ENCODE measurements at regions of chr18 and their contacts with region 1.

Region 1: DNA sequence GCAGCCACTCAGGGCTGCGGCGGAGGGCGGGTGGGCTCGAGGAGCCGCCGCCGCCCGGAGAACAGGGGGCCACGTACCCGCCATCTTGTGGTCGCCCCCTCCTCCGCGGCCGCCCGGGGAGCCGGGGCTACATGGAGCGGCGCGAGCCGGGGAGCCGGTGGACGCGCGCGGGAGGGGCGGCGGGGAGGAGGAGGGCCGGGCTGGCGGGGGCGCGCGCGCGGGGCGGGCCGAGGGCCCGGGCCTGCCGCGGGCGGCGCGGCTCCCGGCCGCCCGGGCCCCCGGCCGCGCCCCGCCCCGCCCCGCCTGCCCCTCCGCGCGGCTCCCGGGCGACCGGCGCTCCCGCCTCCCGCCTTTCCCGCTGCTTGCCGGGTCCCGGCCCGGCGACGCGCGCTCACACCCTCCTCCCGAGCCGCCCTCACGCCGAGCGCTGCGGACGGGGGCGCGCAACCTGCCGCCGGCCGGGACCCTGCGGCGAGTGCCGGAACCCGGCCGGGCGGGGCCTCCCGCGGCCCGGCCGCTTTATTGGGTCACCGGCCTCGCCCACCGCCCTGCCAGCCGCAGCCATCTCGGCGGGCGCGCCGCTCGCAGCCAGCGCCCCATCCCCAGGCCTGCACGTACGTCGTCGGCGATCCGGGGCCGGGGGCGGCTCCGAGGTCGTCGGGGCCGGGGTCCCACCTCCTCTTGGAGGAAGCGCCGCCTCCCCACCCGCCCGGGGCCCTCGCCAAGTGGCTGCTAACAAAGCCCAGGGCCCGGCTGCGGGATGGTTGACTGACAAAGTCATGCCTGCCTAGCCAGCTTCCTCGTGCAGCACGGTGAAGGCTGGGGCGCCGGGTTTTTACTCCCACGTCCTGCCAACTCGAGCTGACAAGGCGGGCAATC is at the start of gene PPP4R1:
- DNase-seq: peak; percentile 83
- ATAC-seq: peak; percentile 70
- H3K4me3 ChIP-seq: peak within 1 kb of the TSS; percentile 50 to 81 (median 67)
- H3K4me3 Mint-ChIP-seq: peak within 1 kb of the TSS; percentile 93
- H3K27ac ChIP-seq: peak within 1 kb of the TSS; percentile 75 to 76
- H3K27ac Mint-ChIP-seq: peak within 1 kb of the TSS; percentile 92
- H3K4me1 ChIP-seq: peaks cover 15 to 16% of the 10 kb centered on the region in 2 donors
- H3K4me1 Mint-ChIP-seq: peaks cover 24% of the 10 kb centered on the region
- H3K27me3 ChIP-seq: no peaks in the 10 kb centered on the region
- H3K27me3 Mint-ChIP-seq: no peaks in the 10 kb centered on the region
- CTCF ChIP-seq: no peak
- total RNA-seq, gene PPP4R1: 57.1 and 65.0 TPM in 2 replicates

Region 2: DNA sequence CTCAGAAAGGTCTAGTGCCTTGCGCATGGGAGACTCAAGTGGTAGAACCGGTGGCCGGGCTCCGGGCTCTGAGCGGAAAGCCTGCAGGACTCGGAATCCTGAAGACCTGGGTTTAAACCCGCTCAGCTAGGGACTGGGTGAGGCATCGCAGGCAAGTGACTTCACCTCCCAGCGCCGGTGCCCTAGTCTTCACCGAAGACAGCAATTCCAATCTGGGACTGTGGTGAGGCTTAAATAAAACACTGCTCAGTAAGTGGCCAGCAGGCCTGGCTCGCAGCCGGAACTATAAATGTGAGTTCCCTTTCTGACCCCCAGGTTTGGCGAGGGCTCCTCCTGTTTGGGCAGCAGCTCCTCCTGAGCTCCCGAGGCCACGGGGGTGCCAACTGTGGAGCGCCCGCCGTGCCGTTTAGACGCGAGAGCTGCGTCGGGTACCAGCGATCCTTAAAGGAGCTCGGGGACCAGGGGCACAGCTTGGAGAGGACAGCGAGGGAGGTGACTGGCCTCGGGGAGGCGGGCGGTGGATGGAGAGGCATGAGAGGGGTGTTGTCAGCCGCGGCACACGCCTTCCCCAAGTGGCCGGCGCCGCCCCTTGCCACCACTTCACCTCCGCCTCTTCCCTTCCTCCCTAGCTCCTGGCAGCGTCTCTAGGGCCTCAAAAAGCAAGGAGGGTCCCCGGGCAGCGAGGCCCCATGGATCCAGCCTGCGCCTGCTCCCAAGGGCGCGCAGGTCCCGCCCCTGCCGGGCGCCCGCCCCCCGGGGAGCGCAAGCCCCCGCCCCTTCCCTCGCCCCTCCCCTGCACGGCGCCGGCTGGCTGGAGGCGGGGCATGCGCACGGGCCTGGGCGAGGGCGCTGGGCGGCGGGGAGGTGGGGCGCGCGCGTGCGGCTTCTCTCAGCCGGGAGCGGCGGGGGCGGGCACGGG is 910.0 kb before region 1 on chr18:
- CTCF ChIA-PET with region 1: no interaction called
- POLR2A ChIA-PET with region 1: no interaction called
- intact Hi-C with region 1: loop called (anchors 10 kb)
- DNase-seq: peak; percentile 90
- ATAC-seq: peak; percentile 90
- H3K4me3 ChIP-seq: peak overlapping the region; percentile 43 to 89 (median 64)
- H3K4me3 Mint-ChIP-seq: peak overlapping the region; percentile 96
- H3K27ac ChIP-seq: peak overlapping the region; percentile 35 to 40
- H3K27ac Mint-ChIP-seq: peak overlapping the region; percentile 88
- H3K4me1 ChIP-seq: peaks cover 22 to 27% of the 10 kb centered on the region in 2 donors
- H3K4me1 Mint-ChIP-seq: peaks cover 27% of the 10 kb centered on the region
- H3K27me3 ChIP-seq: peaks cover 0 to 38% (median 19%) of the 10 kb centered on the region in 4 experiments
- H3K27me3 Mint-ChIP-seq: peaks cover 30% of the 10 kb centered on the region
- CTCF ChIP-seq: no peak

Region 3: GRCh38 chr18:9147440-9148202 is 467.0 kb before region 1 on chr18:
- CTCF ChIA-PET with region 1: no interaction called
- POLR2A ChIA-PET with region 1: no interaction called
- intact Hi-C with region 1: loop called (anchors 10 kb)
- DNase-seq: peak; percentile 72
- ATAC-seq: peak; percentile 60
- H3K4me3 ChIP-seq: no peak overlapping the region
- H3K4me3 Mint-ChIP-seq: peak overlapping the region; percentile 58
- H3K27ac ChIP-seq: peak overlapping the region; percentile 35 to 48
- H3K27ac Mint-ChIP-seq: peak overlapping the region; percentile 74
- H3K4me1 ChIP-seq: peaks cover 63 to 68% of the 10 kb centered on the region in 2 donors
- H3K4me1 Mint-ChIP-seq: peaks cover 72% of the 10 kb centered on the region
- H3K27me3 ChIP-seq: no peaks in the 10 kb centered on the region
- H3K27me3 Mint-ChIP-seq: no peaks in the 10 kb centered on the region
- CTCF ChIP-seq: peak; percentile 76

Region 4: DNA sequence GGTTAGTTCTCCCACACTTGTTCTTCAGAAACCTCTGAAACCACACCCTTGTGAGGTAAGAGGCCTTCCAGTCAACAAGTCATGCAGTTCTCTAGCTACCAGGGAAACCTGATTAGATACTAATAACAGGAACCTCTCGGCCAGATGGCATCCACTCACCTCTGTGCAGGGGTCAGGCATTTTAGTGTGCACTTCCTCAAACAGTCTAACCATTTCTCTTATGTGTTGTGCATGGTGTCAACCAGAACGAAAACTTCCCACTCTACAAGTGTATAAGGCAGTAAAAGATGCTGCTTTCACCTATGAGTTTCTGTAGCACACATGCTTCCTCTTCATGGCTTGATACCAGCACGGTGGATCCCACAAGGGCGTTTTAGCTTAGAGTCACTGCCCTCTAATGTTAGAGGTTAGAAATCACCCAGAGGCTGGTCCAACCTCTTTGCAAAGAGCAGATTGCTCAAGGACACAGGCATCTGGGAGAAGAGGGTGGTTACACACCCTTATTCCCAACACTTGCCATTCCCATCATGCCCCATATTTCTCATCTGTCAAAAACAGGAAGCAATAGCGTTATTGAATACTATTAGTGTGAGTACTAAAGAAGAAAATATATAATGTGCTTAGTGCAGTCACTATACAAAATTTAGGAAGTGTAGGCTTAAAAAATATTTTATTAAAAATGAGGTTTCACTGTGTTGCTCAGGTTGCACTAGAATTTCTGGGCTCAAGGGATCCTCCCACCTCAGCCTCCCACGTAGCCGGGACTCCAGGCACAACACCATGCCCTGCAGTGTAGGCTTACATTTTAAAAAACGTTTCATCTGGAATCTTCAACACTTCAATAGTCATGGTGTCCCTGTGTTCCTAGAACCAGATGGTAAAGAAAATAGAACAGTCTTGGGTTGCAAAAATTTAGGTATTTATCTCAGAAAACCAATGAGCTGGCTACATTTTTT is 58.9 kb after region 1 on chr18:
- CTCF ChIA-PET with region 1: interaction called, 16 read pairs
- POLR2A ChIA-PET with region 1: no interaction called
- intact Hi-C with region 1: loop called (anchors 1 kb)
- DNase-seq: peak; percentile 95
- ATAC-seq: peak; percentile 95
- H3K4me3 ChIP-seq: no peak overlapping the region
- H3K4me3 Mint-ChIP-seq: peak overlapping the region; percentile 40
- H3K27ac ChIP-seq: peak overlapping the region; percentile 65 to 78
- H3K27ac Mint-ChIP-seq: peak overlapping the region; percentile 90
- H3K4me1 ChIP-seq: peaks cover 12 to 15% of the 10 kb centered on the region in 2 donors
- H3K4me1 Mint-ChIP-seq: peaks cover 10% of the 10 kb centered on the region
- H3K27me3 ChIP-seq: no peaks in the 10 kb centered on the region
- H3K27me3 Mint-ChIP-seq: no peaks in the 10 kb centered on the region
- CTCF ChIP-seq: peak; percentile 65

Region 5: DNA sequence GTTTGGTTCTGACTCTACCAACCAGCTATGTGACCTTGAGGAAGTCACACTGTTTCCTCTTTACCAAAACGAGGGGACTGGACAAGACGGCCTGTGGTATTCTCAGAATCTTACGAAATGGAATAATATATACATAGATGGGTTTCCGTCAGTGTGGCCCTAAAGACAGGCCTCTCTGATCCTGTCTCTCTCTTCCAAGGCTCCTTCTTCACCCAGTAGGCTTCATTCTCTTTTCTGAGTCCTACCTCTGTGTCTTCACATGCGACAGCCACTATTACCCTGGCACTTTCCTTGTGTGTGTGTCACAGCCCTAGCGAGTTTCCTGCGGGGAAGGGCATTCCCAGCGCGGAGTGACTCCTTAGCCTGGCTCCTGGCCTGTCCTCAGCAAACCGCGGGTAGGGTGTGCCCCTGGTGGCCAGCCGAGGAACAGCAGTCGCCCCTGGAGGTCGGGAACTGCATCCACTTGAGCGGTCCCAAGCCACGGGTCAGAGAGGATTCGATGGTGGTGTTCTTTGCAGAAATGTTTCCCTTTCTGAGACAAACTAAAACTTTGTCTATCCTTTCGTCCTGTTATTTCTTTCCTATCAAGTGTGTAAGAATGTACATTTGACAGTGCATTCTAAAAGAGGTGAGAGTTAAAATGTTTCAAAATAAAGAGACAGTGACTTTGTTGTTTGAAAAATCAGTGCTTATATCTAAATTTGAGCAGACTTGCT is 156.8 kb after region 1 on chr18:
- CTCF ChIA-PET with region 1: interaction called, 13 read pairs
- POLR2A ChIA-PET with region 1: no interaction called
- intact Hi-C with region 1: loop called (anchors 1 kb)
- DNase-seq: peak; percentile 72
- ATAC-seq: peak; percentile 92
- H3K4me3 ChIP-seq: no peak overlapping the region
- H3K4me3 Mint-ChIP-seq: peak overlapping the region; percentile 47
- H3K27ac ChIP-seq: no peak overlapping the region
- H3K27ac Mint-ChIP-seq: no peak overlapping the region
- H3K4me1 ChIP-seq: peaks cover 0 to 13% of the 10 kb centered on the region in 2 donors
- H3K4me1 Mint-ChIP-seq: peaks cover 26% of the 10 kb centered on the region
- H3K27me3 ChIP-seq: no peaks in the 10 kb centered on the region
- H3K27me3 Mint-ChIP-seq: no peaks in the 10 kb centered on the region
- CTCF ChIP-seq: peak; percentile 98

Region 6: GRCh38 chr18:10525371-10526210 is 911.0 kb after region 1 on chr18 and contains the start of gene NAPG:
- CTCF ChIA-PET with region 1: no interaction called
- POLR2A ChIA-PET with region 1: no interaction called
- intact Hi-C with region 1: loop called (anchors 10 kb)
- DNase-seq: peak; percentile 96
- ATAC-seq: peak; percentile 90
- H3K4me3 ChIP-seq: peak within 1 kb of the TSS; percentile 79 to 94 (median 88)
- H3K4me3 Mint-ChIP-seq: peak within 1 kb of the TSS; percentile 99
- H3K27ac ChIP-seq: peak within 1 kb of the TSS; percentile 77 to 80
- H3K27ac Mint-ChIP-seq: peak within 1 kb of the TSS; percentile 96
- H3K4me1 ChIP-seq: peaks cover 20 to 39% of the 10 kb centered on the region in 2 donors
- H3K4me1 Mint-ChIP-seq: peaks cover 51% of the 10 kb centered on the region
- H3K27me3 ChIP-seq: no peaks in the 10 kb centered on the region
- H3K27me3 Mint-ChIP-seq: no peaks in the 10 kb centered on the region
- CTCF ChIP-seq: no peak
- total RNA-seq, gene NAPG: 31.8 and 38.7 TPM in 2 replicates